CD8-positive, alpha-beta T cell (primary cell): ENCODE measurements at regions of chr6 and their contacts with region 1.

Region 1: GRCh38 chr6:20401205-20402091 is at the start of gene E2F3:
- DNase-seq: peak; percentile 98 to 100 (median 99)
- ATAC-seq: peak; percentile 83
- H3K4me3 ChIP-seq: peak within 1 kb of the TSS; percentile 71 to 86
- H3K4me3 Mint-ChIP-seq: peak within 1 kb of the TSS; percentile 96
- H3K27ac ChIP-seq: peak within 1 kb of the TSS; percentile 63 to 68
- H3K27ac Mint-ChIP-seq: peak within 1 kb of the TSS; percentile 72
- H3K4me1 ChIP-seq: peaks cover 10% of the 10 kb centered on the region
- H3K4me1 Mint-ChIP-seq: peaks cover 40% of the 10 kb centered on the region
- H3K27me3 ChIP-seq: no peaks in the 10 kb centered on the region
- H3K27me3 Mint-ChIP-seq: no peaks in the 10 kb centered on the region
- CTCF ChIP-seq: no peak
- total RNA-seq, gene E2F3: 5.0 to 6.2 TPM

Region 2: DNA sequence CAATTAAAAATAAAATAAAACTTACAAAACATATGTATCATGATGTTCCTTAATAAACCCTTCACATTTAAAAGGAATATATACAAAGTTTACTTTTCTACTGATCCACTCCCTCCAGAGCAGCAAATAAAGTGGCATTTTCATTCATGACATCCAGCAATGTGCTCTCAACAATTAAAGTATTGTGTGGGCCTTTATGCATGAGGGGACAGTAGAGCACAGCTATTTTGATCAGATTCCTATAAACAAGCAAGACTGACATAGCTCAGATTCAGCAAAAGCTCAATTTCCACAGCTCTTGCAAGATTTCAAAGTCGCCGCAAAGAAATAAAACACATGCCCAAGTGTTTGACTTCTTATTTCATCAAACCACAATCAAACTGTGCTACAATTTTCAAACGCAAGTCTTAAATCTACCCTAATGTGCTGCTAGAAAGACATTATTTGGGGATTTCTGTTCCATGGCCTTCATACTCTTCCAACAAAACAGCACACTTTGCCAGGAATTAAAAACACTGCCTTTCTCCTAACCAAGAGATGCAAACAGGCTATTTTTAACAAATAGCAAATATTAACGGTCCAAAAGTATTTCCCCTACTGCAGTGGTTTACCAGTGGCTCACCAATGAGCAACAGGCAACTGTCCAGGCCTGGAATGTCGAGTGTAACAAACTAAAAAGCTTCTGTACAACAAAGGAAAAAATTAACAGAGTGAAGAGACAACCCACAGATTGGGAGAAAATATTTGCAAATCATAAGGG is 241.5 kb before region 1 on chr6:
- CTCF ChIA-PET with region 1: no interaction called
- POLR2A ChIA-PET with region 1: no interaction called
- intact Hi-C with region 1: no loop called
- DNase-seq: no peak
- ATAC-seq: no peak
- H3K4me3 ChIP-seq: no peak overlapping the region
- H3K4me3 Mint-ChIP-seq: no peak overlapping the region
- H3K27ac ChIP-seq: no peak overlapping the region
- H3K27ac Mint-ChIP-seq: no peak overlapping the region
- H3K4me1 ChIP-seq: no peaks in the 10 kb centered on the region
- H3K4me1 Mint-ChIP-seq: no peaks in the 10 kb centered on the region
- H3K27me3 ChIP-seq: no peaks in the 10 kb centered on the region
- H3K27me3 Mint-ChIP-seq: no peaks in the 10 kb centered on the region
- CTCF ChIP-seq: no peak

Region 3: DNA sequence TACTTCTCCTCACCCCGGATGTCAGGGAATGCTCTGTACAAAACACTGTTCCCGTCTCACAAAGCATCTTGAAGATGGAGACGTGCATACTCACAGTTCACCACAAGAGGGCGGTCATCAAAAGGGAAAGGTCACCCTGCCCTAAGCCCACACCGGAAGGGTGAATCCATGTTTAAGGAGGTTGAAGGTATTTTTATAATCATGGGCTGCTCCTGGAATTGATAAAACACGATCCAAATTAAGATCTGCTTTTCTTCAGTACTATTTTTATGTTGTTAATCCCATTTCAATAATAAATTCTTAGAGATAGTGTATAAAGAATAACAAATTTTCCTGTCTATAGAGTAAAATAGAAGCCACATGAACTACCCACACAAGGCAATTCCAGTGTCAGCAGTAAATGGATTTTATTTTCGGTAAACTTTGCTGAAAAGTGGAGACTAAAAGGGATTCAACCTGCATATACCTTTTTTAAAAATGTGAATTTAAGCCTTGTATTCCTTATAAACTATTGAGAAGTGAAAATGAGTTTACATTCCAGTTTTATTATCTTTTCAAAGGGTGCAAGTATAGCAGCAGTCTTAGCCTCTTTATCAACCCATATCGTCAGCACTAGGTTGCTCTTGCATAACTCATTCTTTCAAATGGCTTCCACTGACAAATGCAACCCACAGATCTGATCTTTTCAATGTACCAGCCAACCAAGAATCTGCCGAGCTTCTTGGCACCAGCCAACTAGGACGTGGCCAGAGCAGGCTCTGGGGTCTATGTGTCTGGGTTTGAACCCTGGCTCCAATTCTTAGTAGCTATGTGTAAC is 109.5 kb before region 1 on chr6:
- CTCF ChIA-PET with region 1: interaction called, 56 read pairs
- POLR2A ChIA-PET with region 1: interaction called, 6 read pairs
- intact Hi-C with region 1: loop called (anchors 1 to 5 kb)
- DNase-seq: peak; percentile 34 to 86 (median 77)
- ATAC-seq: peak; percentile 95
- H3K4me3 ChIP-seq: no peak overlapping the region
- H3K4me3 Mint-ChIP-seq: peak overlapping the region; percentile 26
- H3K27ac ChIP-seq: no peak overlapping the region
- H3K27ac Mint-ChIP-seq: peak overlapping the region; percentile 43
- H3K4me1 ChIP-seq: peaks cover 13% of the 10 kb centered on the region
- H3K4me1 Mint-ChIP-seq: peaks cover 24% of the 10 kb centered on the region
- H3K27me3 ChIP-seq: no peaks in the 10 kb centered on the region
- H3K27me3 Mint-ChIP-seq: no peaks in the 10 kb centered on the region
- CTCF ChIP-seq: peak; percentile 95

Region 4: GRCh38 chr6:20325641-20326421 is 75.6 kb before region 1 on chr6:
- CTCF ChIA-PET with region 1: interaction called, 42 read pairs
- POLR2A ChIA-PET with region 1: interaction called, 106 read pairs
- intact Hi-C with region 1: loop called in 1 of 2 experiments (anchors 2 kb)
- DNase-seq: peak in 1 of 9 experiments; percentile 33
- ATAC-seq: no peak
- H3K4me3 ChIP-seq: no peak overlapping the region
- H3K4me3 Mint-ChIP-seq: no peak overlapping the region
- H3K27ac ChIP-seq: no peak overlapping the region
- H3K27ac Mint-ChIP-seq: no peak overlapping the region
- H3K4me1 ChIP-seq: peaks cover 1% of the 10 kb centered on the region
- H3K4me1 Mint-ChIP-seq: peaks cover under 1% of the 10 kb centered on the region
- H3K27me3 ChIP-seq: no peaks in the 10 kb centered on the region
- H3K27me3 Mint-ChIP-seq: no peaks in the 10 kb centered on the region
- CTCF ChIP-seq: no peak

Region 5: DNA sequence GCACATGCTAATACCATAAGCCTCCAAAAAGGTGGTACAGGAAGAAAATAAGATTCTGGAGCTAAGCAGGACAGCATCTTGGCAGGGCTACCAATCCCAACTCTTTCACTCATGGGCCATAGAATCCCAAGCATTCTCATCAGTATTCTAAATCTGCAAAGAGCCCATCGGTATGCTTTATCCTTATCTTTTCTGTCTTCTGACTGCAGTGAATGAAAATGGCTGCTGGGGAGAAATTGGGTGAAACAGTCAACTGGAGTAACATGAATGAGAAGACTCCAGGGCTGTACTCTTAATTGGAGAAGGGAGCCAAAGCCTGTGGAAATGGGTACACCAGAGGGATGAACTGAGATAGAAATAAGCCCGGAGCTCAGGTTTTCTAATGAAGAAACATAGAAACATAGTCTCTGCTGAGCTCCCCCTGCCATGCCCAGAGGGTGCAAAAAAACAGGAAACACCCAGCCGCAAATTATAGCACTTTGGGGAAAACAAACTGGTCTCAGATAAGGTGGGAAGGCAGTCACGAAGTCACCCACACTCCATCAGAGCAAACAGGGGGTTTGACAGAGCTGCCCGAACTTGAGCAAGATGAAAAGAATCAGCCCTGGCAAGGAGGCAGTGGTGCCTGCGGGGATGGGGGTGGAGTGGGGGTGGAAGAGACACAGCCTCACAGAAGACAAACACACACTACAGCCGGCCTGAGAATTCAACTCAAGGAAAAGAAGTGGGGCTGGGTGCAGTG is 35.2 kb before region 1 on chr6:
- CTCF ChIA-PET with region 1: interaction called, 31 read pairs
- POLR2A ChIA-PET with region 1: interaction called, 61 read pairs
- intact Hi-C with region 1: loop called in 1 of 2 experiments (anchors 1 kb)
- DNase-seq: peak; percentile 17 to 89 (median 57)
- ATAC-seq: peak; percentile 77
- H3K4me3 ChIP-seq: peak overlapping the region in 1 of 2 experiments; percentile 10
- H3K4me3 Mint-ChIP-seq: peak overlapping the region; percentile 74
- H3K27ac ChIP-seq: peak overlapping the region; percentile 29 to 72
- H3K27ac Mint-ChIP-seq: peak overlapping the region; percentile 96
- H3K4me1 ChIP-seq: peaks cover 61% of the 10 kb centered on the region
- H3K4me1 Mint-ChIP-seq: peaks cover 65% of the 10 kb centered on the region
- H3K27me3 ChIP-seq: no peaks in the 10 kb centered on the region
- H3K27me3 Mint-ChIP-seq: no peaks in the 10 kb centered on the region
- CTCF ChIP-seq: no peak

Region 6: DNA sequence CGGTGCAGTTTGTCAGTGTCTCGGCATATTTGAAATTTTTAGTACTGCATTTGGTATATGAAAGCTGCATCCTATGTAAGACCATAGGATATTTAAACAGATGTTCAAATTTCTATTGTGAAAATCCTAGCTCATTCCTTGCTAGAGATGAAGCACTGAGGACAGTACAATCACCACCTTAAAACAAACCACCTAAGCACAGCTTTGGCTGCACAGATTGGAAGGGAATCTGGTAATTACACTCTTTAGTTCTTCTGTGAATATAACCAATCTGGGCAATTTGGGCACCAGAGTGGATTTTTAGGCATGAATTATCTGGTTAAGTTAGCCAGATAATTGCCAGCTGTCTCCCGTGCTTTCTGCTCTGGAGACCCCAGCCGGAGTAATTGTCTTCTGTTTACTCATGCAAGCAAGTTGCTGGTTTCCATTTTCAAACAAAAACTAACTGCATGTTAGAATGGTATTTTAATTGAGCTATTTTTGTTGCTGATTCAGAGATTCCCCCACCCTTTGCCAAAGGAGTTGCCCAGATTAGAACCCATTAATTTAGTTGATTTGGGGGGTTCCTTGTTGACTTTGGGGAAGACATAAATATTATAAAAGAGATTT is 37.1 kb after region 1 on chr6:
- CTCF ChIA-PET with region 1: interaction called, 5 read pairs
- POLR2A ChIA-PET with region 1: no interaction called
- intact Hi-C with region 1: loop called in 1 of 2 experiments (anchors 5 kb)
- DNase-seq: no peak
- ATAC-seq: no peak
- H3K4me3 ChIP-seq: no peak overlapping the region
- H3K4me3 Mint-ChIP-seq: no peak overlapping the region
- H3K27ac ChIP-seq: no peak overlapping the region
- H3K27ac Mint-ChIP-seq: no peak overlapping the region
- H3K4me1 ChIP-seq: no peaks in the 10 kb centered on the region
- H3K4me1 Mint-ChIP-seq: peaks cover 15% of the 10 kb centered on the region
- H3K27me3 ChIP-seq: no peaks in the 10 kb centered on the region
- H3K27me3 Mint-ChIP-seq: no peaks in the 10 kb centered on the region
- CTCF ChIP-seq: no peak

Region 7: GRCh38 chr6:20468209-20468608 is 66.8 kb after region 1 on chr6:
- CTCF ChIA-PET with region 1: interaction called, 10 read pairs
- POLR2A ChIA-PET with region 1: interaction called, 3 read pairs
- intact Hi-C with region 1: no loop called
- DNase-seq: no peak
- ATAC-seq: no peak
- H3K4me3 ChIP-seq: no peak overlapping the region
- H3K4me3 Mint-ChIP-seq: no peak overlapping the region
- H3K27ac ChIP-seq: no peak overlapping the region
- H3K27ac Mint-ChIP-seq: no peak overlapping the region
- H3K4me1 ChIP-seq: no peaks in the 10 kb centered on the region
- H3K4me1 Mint-ChIP-seq: peaks cover 19% of the 10 kb centered on the region
- H3K27me3 ChIP-seq: no peaks in the 10 kb centered on the region
- H3K27me3 Mint-ChIP-seq: no peaks in the 10 kb centered on the region
- CTCF ChIP-seq: no peak

Region 8: GRCh38 chr6:21593412-21593926 is 1192.0 kb after region 1 on chr6 and contains the start of gene SOX4:
- CTCF ChIA-PET with region 1: no interaction called
- POLR2A ChIA-PET with region 1: no interaction called
- intact Hi-C with region 1: loop called in 1 of 2 experiments (anchors 5 kb)
- DNase-seq: peak in 8 of 9 experiments; percentile 40 to 90 (median 72)
- ATAC-seq: peak; percentile 71
- H3K4me3 ChIP-seq: peak within 1 kb of the TSS; percentile 62 to 66
- H3K4me3 Mint-ChIP-seq: no peak within 1 kb of the TSS
- H3K27ac ChIP-seq: peak within 1 kb of the TSS; percentile 19 to 33
- H3K27ac Mint-ChIP-seq: peak within 1 kb of the TSS; percentile 78
- H3K4me1 ChIP-seq: peaks cover 28% of the 10 kb centered on the region
- H3K4me1 Mint-ChIP-seq: peaks cover 25% of the 10 kb centered on the region
- H3K27me3 ChIP-seq: peaks cover under 1 to 23% of the 10 kb centered on the region in 2 experiments
- H3K27me3 Mint-ChIP-seq: peaks cover 15% of the 10 kb centered on the region
- CTCF ChIP-seq: no peak
- total RNA-seq, gene SOX4: 20.2 to 20.4 TPM